Left colon (tissue), 2 donors: ENCODE measurements at regions of chr14 and their contacts with region 1.

Region 1: GRCh38 chr14:67837011-67837624 is 17.5 kb downstream of the RAD51B start:
- DNase-seq: peak in 1 of 2 donors; percentile 72
- ATAC-seq: peak; percentile 81

Region 2: GRCh38 chr14:68834816-68835215 is 997.7 kb after region 1 on chr14:
- intact Hi-C with region 1: loop called in 1 of 2 experiments (anchors 10 kb)
- DNase-seq: no peak
- ATAC-seq: no peak